ENCODE measurements at regions of chr2 and their contacts with region 1.

Region 1: GRCh38 chr2:172710584-172711024 is 25.0 kb upstream of the RAPGEF4 start:
- DNase-seq: peak; percentile 56 to 66
- ATAC-seq: peak; percentile 87
- H3K4me3 ChIP-seq: no peak overlapping the region
- H3K27ac ChIP-seq: no peak overlapping the region
- H3K4me1 ChIP-seq: 0 out of 3 replicates have a peak, but pooled peaks cover 4% of the 10 kb centered on the region
- CTCF ChIP-seq: peak; percentile 94
- EP300 ChIP-seq: no peak
- POLR2A ChIP-seq: no peak
- RAD21 ChIP-seq: peak; percentile 96

Region 2: DNA sequence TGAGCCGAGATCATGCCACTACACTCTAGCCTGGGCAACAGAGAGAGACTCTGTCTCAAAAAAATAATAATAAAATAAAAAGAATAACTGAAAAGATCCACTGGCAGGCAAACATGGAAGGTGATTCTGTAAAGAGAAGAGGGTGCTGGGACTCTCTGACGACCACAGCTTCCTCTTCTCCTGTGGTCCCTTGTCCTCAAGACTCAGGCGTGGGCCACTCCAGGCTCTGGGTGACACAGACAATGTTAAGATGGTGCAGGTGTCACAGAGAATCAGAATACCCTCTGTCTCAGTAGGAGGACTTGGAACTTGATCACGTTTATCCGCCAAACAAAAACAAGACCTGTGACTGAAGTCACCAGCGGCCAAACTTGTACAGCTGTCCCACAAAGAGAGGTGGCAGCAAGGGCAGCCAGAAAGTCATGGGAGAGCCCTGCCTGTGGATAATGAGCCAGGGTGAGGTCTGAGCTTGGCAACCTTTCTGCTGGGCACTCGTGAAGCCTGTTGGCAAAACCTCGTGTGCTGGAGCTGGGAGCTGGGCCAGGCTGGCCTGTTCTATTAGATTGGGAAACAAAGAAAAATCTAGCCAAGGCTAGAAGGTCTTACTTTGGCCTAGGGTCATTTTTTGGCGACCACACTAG is 359.6 kb before region 1 on chr2:
- CTCF ChIA-PET with region 1: no interaction called
- POLR2A ChIA-PET with region 1: no interaction called
- DNase-seq: no peak
- ATAC-seq: no peak
- H3K4me3 ChIP-seq: no peak overlapping the region
- H3K27ac ChIP-seq: no peak overlapping the region
- H3K4me1 ChIP-seq: peaks cover 11% of the 10 kb centered on the region; the same call in 2 of the 3 replicates
- CTCF ChIP-seq: no peak
- EP300 ChIP-seq: no peak
- POLR2A ChIP-seq: no peak
- RAD21 ChIP-seq: no peak

Region 3: DNA sequence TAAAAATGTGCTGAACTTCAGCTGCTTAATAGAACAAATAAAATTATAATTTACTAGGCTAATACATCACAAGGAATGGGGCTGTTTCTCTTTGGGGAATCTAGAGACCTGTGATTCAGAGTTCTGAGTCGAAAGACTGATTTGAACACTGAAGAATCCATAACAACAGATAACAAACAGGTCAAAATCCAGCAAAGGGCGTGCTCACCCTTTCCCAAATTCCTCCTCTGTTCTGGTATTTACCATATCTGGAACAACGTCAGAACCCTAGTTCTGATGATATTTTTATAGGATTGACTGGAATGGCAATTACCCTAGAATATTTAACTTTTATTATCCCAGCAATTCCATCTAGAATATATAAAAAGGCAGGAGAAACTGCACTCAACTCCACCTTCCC is 349.2 kb before region 1 on chr2:
- CTCF ChIA-PET with region 1: no interaction called
- POLR2A ChIA-PET with region 1: no interaction called
- DNase-seq: no peak
- ATAC-seq: no peak
- H3K4me3 ChIP-seq: no peak overlapping the region
- H3K27ac ChIP-seq: no peak overlapping the region
- H3K4me1 ChIP-seq: no peaks in the 10 kb centered on the region; the same call in 2 of the 3 replicates
- CTCF ChIP-seq: no peak
- EP300 ChIP-seq: no peak
- POLR2A ChIP-seq: no peak
- RAD21 ChIP-seq: no peak

Region 4: GRCh38 chr2:172571245-172571644 is 139.4 kb before region 1 on chr2:
- CTCF ChIA-PET with region 1: interaction called, 10 read pairs
- POLR2A ChIA-PET with region 1: no interaction called
- DNase-seq: no peak
- ATAC-seq: no peak
- H3K4me3 ChIP-seq: no peak overlapping the region
- H3K27ac ChIP-seq: no peak overlapping the region
- H3K4me1 ChIP-seq: no peaks in the 10 kb centered on the region
- CTCF ChIP-seq: no peak
- EP300 ChIP-seq: no peak
- POLR2A ChIP-seq: no peak
- RAD21 ChIP-seq: no peak

Region 5: GRCh38 chr2:172596776-172597175 is 113.8 kb before region 1 on chr2:
- CTCF ChIA-PET with region 1: interaction called, 217 read pairs
- POLR2A ChIA-PET with region 1: interaction called, 3 read pairs
- DNase-seq: no peak
- ATAC-seq: no peak
- H3K4me3 ChIP-seq: no peak overlapping the region
- H3K27ac ChIP-seq: no peak overlapping the region
- H3K4me1 ChIP-seq: 0 out of 3 replicates have a peak, but pooled peaks cover 3% of the 10 kb centered on the region
- CTCF ChIP-seq: no peak
- EP300 ChIP-seq: no peak
- POLR2A ChIP-seq: no peak
- RAD21 ChIP-seq: no peak

Region 6: DNA sequence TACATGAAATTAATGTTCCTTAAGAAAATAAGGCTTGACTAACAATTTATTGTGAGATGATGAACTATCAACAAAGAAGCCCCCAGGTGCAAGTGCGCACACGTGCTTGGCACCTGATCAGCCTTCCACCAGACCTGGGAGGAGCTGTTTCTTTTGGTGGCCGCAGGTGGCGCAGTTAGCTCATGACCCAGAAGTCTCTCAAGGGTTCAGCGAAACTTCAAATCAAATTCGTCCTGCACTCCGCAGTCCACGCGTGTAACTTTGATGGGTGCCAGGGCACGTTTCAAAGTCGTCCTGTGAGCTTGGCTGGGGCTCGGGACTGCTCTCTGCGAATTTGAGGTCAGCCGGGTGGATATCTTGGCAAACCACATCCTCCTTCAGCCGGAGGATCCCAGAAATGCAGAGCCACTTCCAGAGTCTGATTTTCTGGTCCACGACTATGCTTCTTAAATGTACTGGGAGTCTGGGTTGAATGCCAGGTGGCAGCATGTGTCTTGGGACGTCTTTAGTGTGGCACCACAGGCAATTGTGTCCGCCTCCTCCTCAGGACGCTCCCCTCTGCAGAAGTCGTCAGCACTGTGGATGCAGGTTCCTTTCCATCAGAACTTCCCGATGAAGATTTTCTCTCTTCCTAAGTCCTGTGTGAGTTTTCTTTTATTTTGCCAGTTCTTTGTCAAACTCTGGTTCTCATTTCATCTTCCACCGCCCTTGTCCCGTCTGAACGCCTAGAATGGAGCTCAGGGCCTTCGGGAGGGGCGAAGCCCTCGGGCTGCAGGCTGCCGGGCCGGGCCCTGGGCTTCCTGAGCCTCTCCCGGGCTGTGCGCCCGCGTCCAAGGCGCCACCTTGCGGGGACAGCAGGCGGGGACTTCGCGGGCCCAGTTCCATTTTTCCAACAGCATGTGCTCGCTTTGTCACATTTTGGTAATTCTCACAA is 36.3 kb before region 1 on chr2:
- CTCF ChIA-PET with region 1: interaction called, 13 read pairs
- POLR2A ChIA-PET with region 1: no interaction called
- DNase-seq: no peak
- ATAC-seq: no peak
- H3K4me3 ChIP-seq: no peak overlapping the region
- H3K27ac ChIP-seq: peak overlapping the region; percentile 75 to 80
- H3K4me1 ChIP-seq: peaks cover 36% of the 10 kb centered on the region
- CTCF ChIP-seq: no peak
- EP300 ChIP-seq: no peak
- POLR2A ChIP-seq: no peak
- RAD21 ChIP-seq: no peak

Region 7: DNA sequence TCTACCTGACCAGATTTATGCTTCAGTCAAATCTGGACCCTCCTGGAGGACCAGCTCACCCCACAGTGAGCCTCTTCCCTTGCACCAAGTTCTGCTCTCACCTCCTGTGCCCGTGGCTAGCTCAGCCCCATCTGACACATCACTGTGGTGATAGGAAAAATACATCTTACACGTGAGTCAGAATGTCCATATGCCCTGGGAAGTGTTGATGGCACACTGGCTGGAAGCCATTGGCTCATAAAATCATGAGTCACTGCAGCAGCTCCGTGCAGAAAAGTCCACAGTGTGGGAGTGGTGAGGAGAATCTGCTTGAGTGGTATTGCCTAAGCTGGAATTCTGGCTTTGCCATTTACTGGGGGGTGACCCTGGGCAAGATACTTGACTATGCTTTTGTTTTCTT is 17.6 kb before region 1 on chr2:
- CTCF ChIA-PET with region 1: interaction called, 14 read pairs
- POLR2A ChIA-PET with region 1: no interaction called
- DNase-seq: peak; percentile 78 to 93
- ATAC-seq: peak; percentile 98 to 99
- H3K4me3 ChIP-seq: no peak overlapping the region
- H3K27ac ChIP-seq: peak overlapping the region; percentile 46 to 75; a peak in 5 of 6 replicates
- H3K4me1 ChIP-seq: peaks cover 30% of the 10 kb centered on the region
- CTCF ChIP-seq: no peak
- EP300 ChIP-seq: peak in 1 of 2 experiments; percentile 17; a peak in 1 of 5 replicates
- POLR2A ChIP-seq: no peak
- RAD21 ChIP-seq: no peak; a peak in 1 of 5 replicates

Region 8: DNA sequence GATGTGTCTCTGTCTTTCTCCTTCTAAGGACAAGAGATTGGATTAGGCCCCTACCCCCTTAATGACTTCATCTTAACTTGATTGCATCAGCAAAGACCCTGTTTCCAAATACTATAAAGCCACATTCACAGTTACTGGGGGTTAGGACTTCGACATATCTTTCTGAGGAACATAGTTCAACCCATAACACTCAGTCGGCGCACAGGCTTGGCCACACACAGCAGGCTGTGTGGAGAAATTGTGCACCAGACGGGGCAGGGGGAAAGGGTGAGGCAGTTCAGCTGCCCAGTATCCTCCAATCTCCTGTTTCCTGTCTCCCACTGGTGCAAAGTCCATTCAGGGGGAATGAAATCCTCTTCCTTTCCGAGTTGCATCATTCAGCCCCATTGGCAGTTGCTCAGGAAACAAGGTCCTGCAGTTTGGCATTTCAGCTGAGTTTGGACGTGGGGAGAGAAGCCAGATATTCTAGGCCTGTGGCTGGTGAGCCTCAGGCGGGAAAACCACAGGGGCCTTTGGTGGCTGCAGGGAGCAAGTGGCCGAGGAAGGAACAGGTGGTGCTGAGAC is 15.7 kb after region 1 on chr2:
- CTCF ChIA-PET with region 1: interaction called, 23 read pairs
- POLR2A ChIA-PET with region 1: no interaction called
- DNase-seq: peak in 1 of 2 experiments; percentile 43
- ATAC-seq: peak in 1 of 2 experiments; percentile 75; a peak in 3 of 6 replicates
- H3K4me3 ChIP-seq: no peak overlapping the region
- H3K27ac ChIP-seq: peak overlapping the region; percentile 42 to 48
- H3K4me1 ChIP-seq: peaks cover 13% of the 10 kb centered on the region
- CTCF ChIP-seq: no peak
- EP300 ChIP-seq: no peak
- POLR2A ChIP-seq: no peak
- RAD21 ChIP-seq: no peak